Left lung (tissue), 14 donors: ENCODE measurements at regions of chr17 and their contacts with region 1.

Region 1: DNA sequence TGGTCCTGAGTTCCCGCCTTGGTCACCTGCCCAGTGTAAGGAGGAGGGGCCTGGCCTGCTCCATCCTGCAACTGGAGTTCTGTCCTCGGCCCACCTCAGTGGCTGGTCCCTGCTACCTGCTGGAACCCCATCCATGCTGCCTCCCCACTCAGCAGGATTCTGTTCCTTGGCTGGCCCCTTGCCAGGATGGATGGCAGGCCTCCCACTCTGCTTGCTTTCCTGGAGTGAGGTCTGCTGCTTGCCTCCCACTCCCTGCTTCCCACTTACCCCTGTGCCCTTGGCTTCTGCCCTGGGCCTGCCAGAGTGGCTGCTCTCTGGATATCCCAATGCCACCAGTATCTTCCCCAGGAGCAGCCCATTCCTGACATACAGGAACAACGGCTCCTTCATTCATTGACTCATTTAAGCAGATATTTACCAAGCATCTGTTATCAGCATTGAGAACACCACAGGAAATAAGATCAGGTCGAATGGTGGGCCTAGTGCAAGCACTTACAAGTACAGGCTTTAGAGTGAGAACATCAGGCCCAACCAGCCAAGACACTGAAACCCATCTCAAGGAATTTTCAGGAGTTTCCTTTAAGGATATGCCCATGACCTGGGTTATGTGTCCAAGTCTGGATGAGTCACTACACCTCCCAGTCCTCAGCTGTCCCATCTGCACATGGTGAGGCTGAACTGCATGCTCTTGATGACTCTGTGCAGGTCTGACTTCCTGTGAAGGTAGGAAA is 17.0 kb upstream of the RPRML start:
- DNase-seq: no peak
- ATAC-seq: no peak
- H3K4me3 ChIP-seq: no peak overlapping the region
- H3K27ac ChIP-seq: no peak overlapping the region
- H3K4me1 ChIP-seq: no peaks in the 10 kb centered on the region
- H3K27me3 ChIP-seq: no peaks in the 10 kb centered on the region
- CTCF ChIP-seq: no peak

Region 2: DNA sequence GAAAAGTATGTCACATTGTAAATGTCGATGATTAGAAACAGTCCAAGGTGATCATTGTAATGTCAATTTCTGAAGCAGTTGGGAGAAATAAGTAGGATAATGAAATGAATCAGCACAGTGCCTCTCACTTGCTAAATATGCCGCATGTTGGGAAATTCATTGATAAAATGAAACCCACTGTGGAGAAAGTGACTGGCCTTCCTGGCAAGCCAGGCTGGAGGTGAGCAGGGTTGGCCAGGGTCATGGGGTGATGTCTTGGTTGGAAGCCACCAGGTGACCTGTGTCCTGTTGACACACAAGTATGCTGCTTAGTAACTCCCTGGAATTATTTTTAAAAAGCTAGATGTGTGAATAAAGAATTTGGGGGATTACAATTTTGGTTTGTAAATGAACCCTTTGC is 159.5 kb before region 1 on chr17:
- intact Hi-C with region 1: loop called in 1 of 2 experiments (anchors 5 kb)
- DNase-seq: no peak
- ATAC-seq: no peak
- H3K4me3 ChIP-seq: no peak overlapping the region
- H3K27ac ChIP-seq: no peak overlapping the region
- H3K4me1 ChIP-seq: peaks cover 0 to 2% of the 10 kb centered on the region in 2 donors
- H3K27me3 ChIP-seq: peaks cover 8 to 41% of the 10 kb centered on the region in 2 donors
- CTCF ChIP-seq: no peak

Region 3: DNA sequence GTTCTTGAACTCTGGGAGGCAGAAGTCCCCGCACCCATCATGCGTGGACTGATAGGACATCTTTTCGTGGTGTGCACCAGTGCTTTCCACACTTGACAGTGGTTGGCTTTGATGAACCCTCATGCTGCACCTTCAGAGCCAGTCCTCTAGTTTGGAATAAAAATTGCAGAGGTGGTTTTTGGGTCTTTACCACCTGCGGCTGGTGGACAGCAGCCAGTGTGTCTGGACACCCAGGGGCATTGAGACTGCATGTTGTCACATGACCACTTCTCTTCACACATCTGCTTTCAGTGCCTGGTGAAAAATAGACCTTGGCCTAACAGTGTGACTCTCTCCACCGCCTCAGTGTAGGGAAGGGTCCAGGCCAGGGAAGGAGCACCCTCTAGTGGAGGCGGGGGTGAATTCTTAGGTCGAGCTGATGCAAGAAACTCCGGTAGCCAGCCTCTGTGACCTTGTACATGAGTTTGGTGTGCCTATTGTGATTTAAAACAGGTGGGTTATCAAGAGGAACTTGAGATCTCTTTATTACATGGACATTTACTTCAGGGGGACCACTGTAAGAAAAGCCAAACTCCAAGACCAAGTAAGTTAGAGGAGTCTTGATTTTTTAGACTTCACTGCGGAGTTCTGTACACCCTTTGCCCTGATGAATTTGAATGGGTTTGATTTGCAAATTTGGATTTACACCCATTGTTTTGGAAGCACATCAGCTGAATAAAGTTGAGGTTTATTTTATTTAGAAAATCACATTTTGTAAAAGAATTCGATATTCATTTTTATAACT is 55.2 kb before region 1 on chr17:
- intact Hi-C with region 1: loop called in 1 of 2 experiments (anchors 10 kb)
- DNase-seq: peak in 3 of 4 donors; percentile 51 to 74 (median 69)
- ATAC-seq: peak; percentile 79
- H3K4me3 ChIP-seq: no peak overlapping the region
- H3K27ac ChIP-seq: no peak overlapping the region
- H3K4me1 ChIP-seq: peaks cover 6 to 17% of the 10 kb centered on the region in 2 donors
- H3K27me3 ChIP-seq: peaks cover 0 to 11% of the 10 kb centered on the region in 2 donors
- CTCF ChIP-seq: peak; percentile 72 to 73